ENCODE measurements at regions of chr7 and their contacts with region 1.

Region 1: DNA sequence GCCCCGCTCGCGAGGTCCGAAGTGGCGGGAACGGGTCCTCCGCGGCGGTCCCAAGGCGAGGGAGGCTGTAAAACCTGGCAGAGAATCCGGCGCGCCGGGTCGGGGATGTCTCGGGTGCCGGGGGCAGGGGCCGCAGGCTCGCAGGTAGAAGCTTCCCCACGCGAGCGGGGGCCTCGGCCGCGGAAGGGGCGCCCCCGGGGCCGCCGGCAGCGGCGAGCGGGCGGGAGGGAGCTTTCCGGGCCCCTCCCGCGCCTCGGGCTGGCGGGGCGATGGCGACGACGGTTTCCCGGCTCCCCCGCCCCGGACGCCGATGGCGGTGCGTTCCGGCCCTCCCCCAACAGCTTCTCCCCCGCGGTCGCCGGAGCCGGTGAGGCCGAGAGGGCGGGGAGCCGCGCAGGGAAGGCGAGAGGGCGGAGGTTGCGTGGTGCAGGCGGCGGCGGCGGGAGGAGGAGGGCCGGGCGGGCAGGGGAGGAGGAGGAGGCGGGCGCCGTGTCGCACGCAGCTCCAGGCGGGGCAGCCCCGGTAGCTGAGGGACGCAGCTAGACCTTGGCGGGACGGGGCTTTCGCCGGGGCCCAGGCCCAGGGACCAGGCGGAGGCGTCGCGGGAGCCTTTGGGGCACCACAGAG is at the start of gene CUL1:
- DNase-seq: peak; percentile 74 to 85 (median 81)
- ATAC-seq: peak; percentile 89
- H3K4me3 ChIP-seq: peak within 1 kb of the TSS; percentile 80
- H3K4me3 Mint-ChIP-seq: peak within 1 kb of the TSS; percentile 85 to 99 (median 93)
- H3K27ac ChIP-seq: peak within 1 kb of the TSS; percentile 93
- H3K27ac Mint-ChIP-seq: peak within 1 kb of the TSS; percentile 87 to 99 (median 93)
- H3K4me1 ChIP-seq: peaks cover 27 to 29% of the 10 kb centered on the region in 2 donors
- H3K4me1 Mint-ChIP-seq: peaks cover 41 to 53% (median 52%) of the 10 kb centered on the region in 7 donors
- H3K27me3 ChIP-seq: no peaks in the 10 kb centered on the region
- H3K27me3 Mint-ChIP-seq: no peaks in the 10 kb centered on the region
- total RNA-seq, gene CUL1: 39.0 to 68.7 (median 53.6) TPM

Region 2: GRCh38 chr7:148527707-148528168 is 170.8 kb before region 1 on chr7:
- CTCF ChIA-PET with region 1: no interaction called
- POLR2A ChIA-PET with region 1: no interaction called
- intact Hi-C with region 1: loop called in 1 of 2 experiments (anchors 1 kb)
- DNase-seq: peak; percentile 63 to 81 (median 77)
- ATAC-seq: peak; percentile 100
- H3K4me3 ChIP-seq: no peak overlapping the region
- H3K4me3 Mint-ChIP-seq: no peak overlapping the region
- H3K27ac ChIP-seq: no peak overlapping the region
- H3K27ac Mint-ChIP-seq: no peak overlapping the region
- H3K4me1 ChIP-seq: no peaks in the 10 kb centered on the region
- H3K4me1 Mint-ChIP-seq: peaks cover 0 to 5% (median 0%) of the 10 kb centered on the region in 7 donors
- H3K27me3 ChIP-seq: no peaks in the 10 kb centered on the region
- H3K27me3 Mint-ChIP-seq: peaks cover 17 to 45% (median 30%) of the 10 kb centered on the region in 5 donors

Region 3: GRCh38 chr7:148624735-148625134 is 73.8 kb before region 1 on chr7:
- CTCF ChIA-PET with region 1: interaction called, 3 read pairs
- POLR2A ChIA-PET with region 1: interaction called, 5 read pairs
- intact Hi-C with region 1: loop called (anchors 1 kb)
- DNase-seq: no peak
- ATAC-seq: no peak
- H3K4me3 ChIP-seq: no peak overlapping the region
- H3K4me3 Mint-ChIP-seq: peak overlapping the region in 6 of 10 donors; percentile 27 to 73 (median 62)
- H3K27ac ChIP-seq: no peak overlapping the region
- H3K27ac Mint-ChIP-seq: peak overlapping the region in 1 of 9 donors; percentile 5
- H3K4me1 ChIP-seq: peaks cover 16 to 30% of the 10 kb centered on the region in 2 donors
- H3K4me1 Mint-ChIP-seq: peaks cover 35 to 70% (median 60%) of the 10 kb centered on the region in 7 donors
- H3K27me3 ChIP-seq: no peaks in the 10 kb centered on the region
- H3K27me3 Mint-ChIP-seq: peaks cover 0 to 20% (median 6%) of the 10 kb centered on the region in 5 donors

Region 4: DNA sequence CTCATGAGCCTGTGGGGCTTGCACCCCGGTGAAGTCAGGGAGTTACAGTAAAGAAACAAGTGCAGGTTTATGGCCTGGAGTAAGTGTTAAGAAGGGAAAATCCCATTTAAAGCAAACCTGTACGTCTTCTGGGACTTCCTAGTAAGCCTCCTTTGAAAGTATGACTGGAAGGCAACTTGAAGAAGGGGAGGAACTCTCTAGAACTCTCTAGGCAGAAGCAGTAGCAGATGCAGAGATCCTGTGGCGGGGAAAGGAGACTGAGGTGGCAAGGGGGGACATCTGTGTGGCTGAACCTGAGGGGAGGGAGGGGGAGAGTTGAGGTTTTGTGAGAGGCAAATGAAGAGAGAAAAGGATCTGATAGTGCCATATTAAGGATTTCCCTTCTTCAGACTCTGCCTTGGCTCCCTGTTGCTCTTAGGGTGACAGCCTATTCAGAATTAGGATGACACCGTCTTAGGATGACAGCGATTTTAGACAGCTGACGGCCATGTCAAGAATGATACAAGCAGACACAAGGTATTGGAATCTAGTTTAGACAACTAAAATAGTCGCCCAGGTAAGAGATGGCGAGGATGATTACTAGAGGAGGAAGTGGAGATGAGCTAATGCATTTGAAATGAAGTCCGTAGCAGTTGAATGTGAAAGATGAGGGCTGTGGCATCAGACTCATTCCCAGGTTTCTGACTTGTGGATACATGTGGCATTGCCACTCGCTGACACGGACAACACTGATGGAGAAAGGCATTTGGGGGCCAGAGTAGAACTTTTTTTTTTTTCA is 29.2 kb after region 1 on chr7:
- CTCF ChIA-PET with region 1: interaction called, 4 read pairs
- POLR2A ChIA-PET with region 1: interaction called, 3 read pairs
- intact Hi-C with region 1: loop called in 1 of 2 experiments (anchors 2 kb)
- DNase-seq: no peak
- ATAC-seq: no peak
- H3K4me3 ChIP-seq: no peak overlapping the region
- H3K4me3 Mint-ChIP-seq: peak overlapping the region in 9 of 10 donors; percentile 0 to 52 (median 25)
- H3K27ac ChIP-seq: no peak overlapping the region
- H3K27ac Mint-ChIP-seq: peak overlapping the region; percentile 2 to 76 (median 19)
- H3K4me1 ChIP-seq: peaks cover 36 to 40% of the 10 kb centered on the region in 2 donors
- H3K4me1 Mint-ChIP-seq: peaks cover 56 to 84% (median 77%) of the 10 kb centered on the region in 7 donors
- H3K27me3 ChIP-seq: no peaks in the 10 kb centered on the region
- H3K27me3 Mint-ChIP-seq: no peaks in the 10 kb centered on the region

Region 5: GRCh38 chr7:148773334-148773733 is 74.8 kb after region 1 on chr7:
- CTCF ChIA-PET with region 1: interaction called, 3 read pairs
- POLR2A ChIA-PET with region 1: interaction called, 6 read pairs
- intact Hi-C with region 1: loop called in 1 of 2 experiments (anchors 5 kb)
- DNase-seq: peak in 8 of 9 donors; percentile 12 to 51 (median 38)
- ATAC-seq: peak; percentile 95
- H3K4me3 ChIP-seq: no peak overlapping the region
- H3K4me3 Mint-ChIP-seq: peak overlapping the region; percentile 34 to 82 (median 67)
- H3K27ac ChIP-seq: peak overlapping the region; percentile 46
- H3K27ac Mint-ChIP-seq: peak overlapping the region; percentile 53 to 93 (median 86)
- H3K4me1 ChIP-seq: peaks cover 18 to 19% of the 10 kb centered on the region in 2 donors
- H3K4me1 Mint-ChIP-seq: peaks cover 27 to 48% (median 36%) of the 10 kb centered on the region in 7 donors
- H3K27me3 ChIP-seq: no peaks in the 10 kb centered on the region
- H3K27me3 Mint-ChIP-seq: no peaks in the 10 kb centered on the region

Region 6: GRCh38 chr7:148940702-148941597 is 242.4 kb after region 1 on chr7:
- CTCF ChIA-PET with region 1: interaction called, 3 read pairs
- POLR2A ChIA-PET with region 1: interaction called, 8 read pairs
- intact Hi-C with region 1: loop called (anchors 1 kb)
- DNase-seq: peak; percentile 45 to 86 (median 76)
- ATAC-seq: peak; percentile 88
- H3K4me3 ChIP-seq: peak overlapping the region; percentile 95
- H3K4me3 Mint-ChIP-seq: peak overlapping the region; percentile 86 to 99 (median 96)
- H3K27ac ChIP-seq: peak overlapping the region; percentile 88
- H3K27ac Mint-ChIP-seq: peak overlapping the region; percentile 94 to 99 (median 98)
- H3K4me1 ChIP-seq: peaks cover 7 to 12% of the 10 kb centered on the region in 2 donors
- H3K4me1 Mint-ChIP-seq: peaks cover 8 to 25% (median 20%) of the 10 kb centered on the region in 7 donors
- H3K27me3 ChIP-seq: no peaks in the 10 kb centered on the region
- H3K27me3 Mint-ChIP-seq: no peaks in the 10 kb centered on the region

Region 7: DNA sequence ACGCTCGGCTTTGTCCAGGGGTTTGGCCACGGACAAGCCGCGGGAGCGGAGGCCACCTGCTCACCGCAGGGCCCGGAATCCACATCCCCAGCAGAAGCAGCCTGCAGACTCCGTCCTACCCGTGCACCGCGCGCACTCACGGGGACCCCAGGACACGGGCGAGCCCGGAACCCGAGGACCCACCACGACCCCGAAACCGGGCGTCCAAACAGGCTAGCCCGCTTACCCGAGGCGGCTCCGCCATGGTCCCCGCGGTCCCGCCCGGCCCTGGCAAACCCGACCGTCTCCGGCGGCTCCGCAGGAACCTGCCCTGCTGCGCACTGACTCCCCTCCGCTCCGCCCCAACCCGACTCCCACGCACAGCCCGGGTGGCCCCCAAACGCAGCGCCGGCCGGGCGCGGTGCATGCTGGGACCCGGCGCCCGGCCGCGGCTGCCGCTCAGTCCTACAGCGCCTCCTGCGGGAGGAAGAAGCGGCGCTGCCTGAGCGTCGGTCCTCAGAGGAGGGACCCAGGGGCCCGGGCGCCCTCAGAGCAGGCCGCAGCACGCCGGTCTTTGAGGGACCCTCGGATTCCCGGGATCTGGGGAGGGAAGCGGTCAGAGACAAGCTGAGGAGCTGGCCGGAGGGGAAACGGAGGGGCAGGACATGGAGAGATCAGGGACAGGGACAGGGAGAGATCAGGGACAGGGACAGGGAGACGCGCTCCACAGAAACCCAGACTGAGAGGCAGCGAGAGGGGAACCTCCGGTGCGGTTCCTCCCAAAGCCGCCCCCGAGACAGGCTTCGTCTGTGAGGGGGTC is 392.1 kb after region 1 on chr7 and contains the start of gene ZNF786:
- CTCF ChIA-PET with region 1: no interaction called
- POLR2A ChIA-PET with region 1: no interaction called
- intact Hi-C with region 1: loop called (anchors 2 to 5 kb)
- DNase-seq: peak; percentile 87 to 97 (median 92)
- ATAC-seq: peak; percentile 95
- H3K4me3 ChIP-seq: peak within 1 kb of the TSS; percentile 93
- H3K4me3 Mint-ChIP-seq: peak within 1 kb of the TSS; percentile 91 to 100 (median 99)
- H3K27ac ChIP-seq: peak within 1 kb of the TSS; percentile 85
- H3K27ac Mint-ChIP-seq: peak within 1 kb of the TSS; percentile 93 to 100 (median 99)
- H3K4me1 ChIP-seq: peaks cover 8 to 9% of the 10 kb centered on the region in 2 donors
- H3K4me1 Mint-ChIP-seq: peaks cover 18 to 40% (median 35%) of the 10 kb centered on the region in 7 donors
- H3K27me3 ChIP-seq: no peaks in the 10 kb centered on the region
- H3K27me3 Mint-ChIP-seq: no peaks in the 10 kb centered on the region
- total RNA-seq, gene ZNF786: 5.4 to 22.0 (median 10.0) TPM

Measured in naive thymus-derived CD4-positive, alpha-beta T cell (primary cell).